ENCODE measurements at regions of chr13 and their contacts with region 1.

Region 1: GRCh38 chr13:51070005-51070649 is 40.9 kb downstream of the C13orf42 start:
- DNase-seq: peak; percentile 68
- ATAC-seq: peak; percentile 92
- H3K4me3 Mint-ChIP-seq: no peak overlapping the region
- H3K27ac Mint-ChIP-seq: no peak overlapping the region
- H3K4me1 Mint-ChIP-seq: peaks cover 7% of the 10 kb centered on the region
- H3K27me3 Mint-ChIP-seq: peaks cover 28% of the 10 kb centered on the region
- CTCF ChIP-seq: peak; percentile 96

Region 2: DNA sequence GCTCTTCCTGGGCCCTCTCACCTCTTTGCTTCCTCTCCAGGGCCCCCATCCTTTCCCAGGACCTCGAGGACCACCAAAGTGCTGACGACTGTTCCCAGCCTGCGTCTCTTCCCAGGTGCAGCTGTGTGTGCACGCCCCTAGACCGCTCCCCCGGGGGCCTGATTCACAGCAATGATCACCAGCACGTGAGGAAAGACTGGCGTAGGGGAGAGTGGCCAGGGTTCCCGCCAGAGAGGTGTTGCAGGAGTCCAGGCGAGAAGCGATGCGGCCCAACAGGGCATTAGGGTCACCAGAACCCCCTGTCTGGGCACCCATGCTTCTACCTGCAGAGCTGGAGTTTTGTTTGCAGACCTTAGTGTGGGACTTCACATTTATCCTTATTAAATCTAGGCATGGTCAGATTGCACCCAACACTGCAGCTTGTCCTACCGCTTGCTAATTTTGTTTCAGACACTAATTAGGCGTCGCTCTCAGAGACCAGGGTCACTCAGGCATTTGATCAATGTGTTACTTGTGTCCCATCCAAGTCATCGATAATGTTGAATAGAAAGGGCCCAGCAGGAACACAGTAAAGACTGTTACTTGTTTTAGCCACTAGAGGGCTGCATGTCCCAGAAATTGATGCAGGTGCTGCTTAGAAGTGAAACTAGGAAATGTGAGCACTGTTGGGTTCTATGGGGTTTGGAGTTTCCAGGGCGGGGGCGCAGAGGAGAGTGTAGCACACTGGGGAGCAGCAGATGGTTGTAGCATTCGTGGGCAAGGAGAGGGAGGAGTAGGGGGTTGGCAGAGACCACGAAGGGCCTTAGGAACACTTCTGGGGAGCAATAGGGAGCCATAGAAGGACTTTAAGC is 1769.2 kb before region 1 on chr13:
- CTCF ChIA-PET with region 1: no interaction called
- POLR2A ChIA-PET with region 1: no interaction called
- intact Hi-C with region 1: loop called (anchors 1 kb)
- DNase-seq: peak; percentile 43
- ATAC-seq: peak; percentile 98
- H3K4me3 Mint-ChIP-seq: peak overlapping the region; percentile 80
- H3K27ac Mint-ChIP-seq: peak overlapping the region; percentile 72
- H3K4me1 Mint-ChIP-seq: peaks cover 33% of the 10 kb centered on the region
- H3K27me3 Mint-ChIP-seq: no peaks in the 10 kb centered on the region
- CTCF ChIP-seq: no peak

Region 3: DNA sequence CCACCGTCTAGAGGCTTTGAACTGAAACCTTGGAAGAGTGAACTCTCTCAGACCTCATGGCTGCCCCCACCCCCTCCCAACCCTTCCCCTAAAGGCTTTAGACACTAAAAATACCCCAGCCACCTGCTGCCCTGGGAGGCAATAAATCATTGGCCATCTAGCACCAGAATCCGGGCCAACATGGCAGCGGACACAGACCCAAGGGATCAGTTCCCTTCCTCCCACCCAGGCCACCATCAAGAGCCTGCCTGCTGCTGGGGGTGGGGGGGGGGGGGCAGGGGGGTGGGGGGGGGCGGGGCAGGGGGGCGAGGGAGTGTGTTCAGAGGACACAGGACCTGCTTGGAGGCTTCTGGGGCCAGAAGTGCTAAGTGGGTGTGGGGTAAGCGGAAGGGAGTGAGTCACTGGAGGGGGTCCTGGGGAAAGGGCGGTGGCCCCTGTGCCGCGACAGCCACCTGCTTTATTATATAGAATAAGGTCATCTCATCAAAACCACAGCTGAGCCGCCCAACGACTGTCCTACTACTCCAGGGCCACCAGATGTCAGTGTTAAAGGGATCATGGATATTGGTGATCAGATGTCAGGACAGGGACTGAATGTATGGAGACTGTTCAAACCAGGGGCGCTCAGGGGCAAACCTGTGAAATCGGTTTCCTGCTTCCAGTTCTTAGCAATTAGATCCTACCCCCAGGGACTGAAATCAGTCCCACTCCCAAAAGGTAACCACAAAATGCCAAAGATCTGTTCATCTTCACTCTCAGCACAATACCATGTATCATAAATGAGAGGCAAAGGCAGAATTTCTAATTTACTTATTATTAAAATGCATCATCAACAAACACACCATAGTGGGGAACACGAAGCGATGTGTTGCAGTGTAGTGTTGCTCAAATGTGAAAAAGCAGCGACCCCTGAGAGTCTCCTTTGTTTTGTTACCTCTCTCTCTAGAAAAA is 1417.5 kb before region 1 on chr13:
- CTCF ChIA-PET with region 1: no interaction called
- POLR2A ChIA-PET with region 1: no interaction called
- intact Hi-C with region 1: loop called (anchors 2 kb)
- DNase-seq: no peak
- ATAC-seq: peak; percentile 78
- H3K4me3 Mint-ChIP-seq: no peak overlapping the region
- H3K27ac Mint-ChIP-seq: no peak overlapping the region
- H3K4me1 Mint-ChIP-seq: peaks cover 6% of the 10 kb centered on the region
- H3K27me3 Mint-ChIP-seq: no peaks in the 10 kb centered on the region
- CTCF ChIP-seq: no peak

Region 4: GRCh38 chr13:49669735-49670309 is 1400.3 kb before region 1 on chr13:
- CTCF ChIA-PET with region 1: no interaction called
- POLR2A ChIA-PET with region 1: no interaction called
- intact Hi-C with region 1: loop called (anchors 1 kb)
- DNase-seq: no peak
- ATAC-seq: no peak
- H3K4me3 Mint-ChIP-seq: no peak overlapping the region
- H3K27ac Mint-ChIP-seq: no peak overlapping the region
- H3K4me1 Mint-ChIP-seq: no peaks in the 10 kb centered on the region
- H3K27me3 Mint-ChIP-seq: no peaks in the 10 kb centered on the region
- CTCF ChIP-seq: no peak

Region 5: DNA sequence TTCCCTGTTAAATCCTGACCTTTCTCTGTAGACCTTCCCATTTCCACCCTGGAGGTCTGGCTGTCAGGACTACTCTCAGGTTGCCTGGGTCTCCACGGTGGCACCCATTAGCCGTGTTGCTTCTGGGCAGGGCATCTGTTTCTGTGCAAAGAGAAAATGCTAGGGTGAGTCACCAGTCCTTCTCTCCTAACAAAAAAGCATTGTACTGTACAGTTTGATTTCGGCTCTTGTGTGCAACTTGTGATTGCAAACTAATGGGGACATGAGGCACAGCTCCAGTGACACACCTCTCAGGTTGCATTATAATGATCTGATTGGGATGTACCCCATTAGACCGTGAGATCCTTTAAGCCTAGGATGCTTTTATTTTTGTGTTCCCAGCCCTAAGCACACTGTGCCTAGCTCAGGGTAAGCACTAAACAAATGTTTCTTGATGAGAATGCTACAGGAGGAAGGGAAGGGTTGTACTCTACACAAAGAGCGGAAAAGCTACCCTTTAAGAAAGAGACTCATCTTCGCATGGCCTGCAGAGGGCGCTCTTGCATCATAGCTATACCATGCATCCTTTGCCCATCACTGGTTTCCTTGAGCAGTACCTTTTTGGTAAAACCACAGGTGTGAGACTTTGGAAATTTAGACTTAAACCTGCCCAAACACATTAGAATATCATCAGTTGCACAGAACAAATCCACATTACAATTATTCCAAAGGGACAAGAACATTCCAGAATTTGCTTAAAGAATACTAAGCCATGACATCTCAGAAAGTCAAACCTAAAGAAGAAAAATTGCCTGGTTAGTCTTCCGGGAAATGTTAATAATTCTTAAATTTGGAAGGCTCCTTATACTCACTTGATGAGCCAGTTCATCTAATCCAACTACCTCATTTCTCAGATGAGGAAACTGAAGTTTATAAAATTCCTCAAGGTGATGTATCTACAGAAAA is 1093.5 kb before region 1 on chr13:
- CTCF ChIA-PET with region 1: interaction called, 29 read pairs
- POLR2A ChIA-PET with region 1: interaction called, 3 read pairs
- intact Hi-C with region 1: loop called (anchors 1 kb)
- DNase-seq: peak; percentile 57
- ATAC-seq: peak; percentile 86
- H3K4me3 Mint-ChIP-seq: no peak overlapping the region
- H3K27ac Mint-ChIP-seq: no peak overlapping the region
- H3K4me1 Mint-ChIP-seq: peaks cover 2% of the 10 kb centered on the region
- H3K27me3 Mint-ChIP-seq: no peaks in the 10 kb centered on the region
- CTCF ChIP-seq: no peak

Region 6: DNA sequence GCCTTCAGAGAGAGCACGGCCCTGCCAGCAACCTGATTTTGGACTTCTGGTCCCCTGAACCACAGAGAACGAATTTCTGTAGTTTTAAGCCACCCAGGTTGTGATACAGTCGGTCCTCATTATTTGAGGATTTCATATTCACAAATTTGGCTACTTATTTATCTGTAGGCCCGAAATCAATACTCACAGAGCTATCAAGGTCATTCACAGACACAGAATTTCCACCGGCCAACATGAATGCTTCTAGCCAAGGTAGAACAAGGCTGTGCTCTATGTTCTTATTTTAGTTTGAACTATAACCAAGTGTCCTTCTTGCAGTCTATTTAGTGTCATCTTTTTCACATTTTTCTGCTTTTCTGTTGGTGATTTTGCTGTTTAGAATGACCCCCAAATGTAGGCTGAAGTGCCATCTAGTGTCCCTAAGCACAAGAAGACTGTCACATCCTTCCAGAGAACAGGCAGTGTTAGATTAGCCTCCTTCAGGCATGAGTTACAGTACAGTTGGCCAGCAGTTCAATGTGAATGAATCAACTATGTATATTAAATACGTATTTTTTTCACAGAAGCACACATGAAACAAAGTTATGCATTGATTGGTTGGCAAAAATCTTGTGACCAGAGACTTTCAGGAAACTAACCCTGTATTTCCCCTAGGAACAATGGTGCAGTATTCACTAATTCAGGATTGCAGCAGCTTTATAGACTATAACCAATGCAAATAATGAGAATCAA is 22.5 kb before region 1 on chr13:
- CTCF ChIA-PET with region 1: no interaction called
- POLR2A ChIA-PET with region 1: no interaction called
- intact Hi-C with region 1: no loop called
- DNase-seq: no peak
- ATAC-seq: no peak
- H3K4me3 Mint-ChIP-seq: no peak overlapping the region
- H3K27ac Mint-ChIP-seq: no peak overlapping the region
- H3K4me1 Mint-ChIP-seq: no peaks in the 10 kb centered on the region
- H3K27me3 Mint-ChIP-seq: peaks cover 3% of the 10 kb centered on the region
- CTCF ChIP-seq: no peak